ENCODE measurements at regions of chr1 and their contacts with region 1.

Region 1: DNA sequence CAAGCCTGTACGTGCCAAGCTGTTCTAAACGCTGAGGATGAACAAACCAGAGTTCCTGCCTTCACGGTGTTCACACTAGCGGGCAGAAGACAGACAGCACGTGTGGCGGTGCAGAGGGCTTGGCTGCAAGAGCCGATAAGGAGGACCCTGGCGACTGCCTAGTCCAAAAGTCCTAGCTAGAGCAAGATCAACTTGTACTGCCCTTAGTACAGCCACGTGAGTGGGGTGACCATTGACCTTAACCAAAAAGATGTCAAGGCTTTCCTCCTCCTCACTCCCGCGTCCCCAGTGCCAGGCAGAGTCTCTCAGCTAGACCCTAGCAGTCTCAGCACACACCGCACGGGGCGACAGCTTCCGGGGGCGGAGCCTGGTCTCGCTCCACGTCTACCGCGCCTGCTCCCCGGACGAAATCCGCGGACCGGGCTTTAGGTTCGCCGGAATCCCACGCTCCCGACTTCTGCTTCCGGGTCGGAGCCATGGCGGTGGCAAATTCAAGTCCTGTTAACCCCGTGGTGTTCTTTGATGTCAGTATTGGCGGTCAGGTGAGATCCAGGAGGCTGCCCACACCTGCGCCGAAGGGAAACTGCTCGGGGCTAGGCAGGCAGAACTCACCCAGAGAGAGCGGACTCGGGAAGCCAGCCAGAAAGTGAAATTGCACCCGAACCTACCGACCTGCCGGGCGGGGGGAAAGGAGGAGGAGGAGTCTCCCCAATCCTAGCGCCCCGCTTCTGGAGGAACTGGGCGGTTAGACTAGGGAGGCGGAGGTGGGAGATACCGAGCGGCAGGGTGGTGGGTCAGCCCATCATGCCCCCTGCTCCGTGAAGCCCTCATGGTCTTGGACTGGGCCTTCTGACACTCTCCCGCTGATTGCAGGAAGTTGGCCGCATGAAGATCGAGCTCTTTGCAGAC is at the start of gene PPIH:
- DNase-seq: peak; percentile 61
- H3K4me3 ChIP-seq: peak within 1 kb of the TSS; percentile 96
- H3K27ac ChIP-seq: peak within 1 kb of the TSS; percentile 57
- H3K27me3 ChIP-seq: peaks cover 4% of the 10 kb centered on the region
- CTCF ChIP-seq: peak; percentile 36; the same call in 1 of the 2 replicates
- polyA plus RNA-seq, gene PPIH: 25.8 and 36.1 TPM in 2 replicates

Region 2: GRCh38 chr1:42319128-42319851 is 338.9 kb before region 1 on chr1:
- CTCF ChIA-PET with region 1: interaction called, 10 read pairs
- POLR2A ChIA-PET with region 1: no interaction called
- DNase-seq: no peak
- H3K4me3 ChIP-seq: no peak overlapping the region
- H3K27ac ChIP-seq: no peak overlapping the region
- H3K27me3 ChIP-seq: no peaks in the 10 kb centered on the region
- CTCF ChIP-seq: no peak

Region 3: GRCh38 chr1:42681741-42682483 is 23.7 kb after region 1 on chr1 and contains the start of gene YBX1:
- CTCF ChIA-PET with region 1: no interaction called
- POLR2A ChIA-PET with region 1: interaction called, 14 read pairs
- DNase-seq: peak; percentile 97
- H3K4me3 ChIP-seq: peak within 1 kb of the TSS; percentile 88
- H3K27ac ChIP-seq: peak within 1 kb of the TSS; percentile 93
- H3K27me3 ChIP-seq: no peaks in the 10 kb centered on the region
- CTCF ChIP-seq: no peak
- polyA plus RNA-seq, gene YBX1: 599 and 636 TPM in 2 replicates